CD4-positive, alpha-beta memory T cell (primary cell): ENCODE measurements at regions of chr1 and their contacts with region 1.

Region 1: GRCh38 chr1:27300341-27301051 is 21.5 kb upstream of the TMEM222 start:
- DNase-seq: peak; percentile 66 to 79 (median 76)
- H3K4me3 ChIP-seq: no peak overlapping the region
- H3K4me3 Mint-ChIP-seq: no peak overlapping the region
- H3K27ac ChIP-seq: no peak overlapping the region
- H3K27ac Mint-ChIP-seq: peak overlapping the region in 1 of 7 donors; percentile 43
- H3K4me1 ChIP-seq: no peaks in the 10 kb centered on the region
- H3K4me1 Mint-ChIP-seq: peaks cover 0 to 2% (median 1%) of the 10 kb centered on the region in 4 donors
- H3K27me3 ChIP-seq: no peaks in the 10 kb centered on the region
- H3K27me3 Mint-ChIP-seq: no peaks in the 10 kb centered on the region

Region 2: DNA sequence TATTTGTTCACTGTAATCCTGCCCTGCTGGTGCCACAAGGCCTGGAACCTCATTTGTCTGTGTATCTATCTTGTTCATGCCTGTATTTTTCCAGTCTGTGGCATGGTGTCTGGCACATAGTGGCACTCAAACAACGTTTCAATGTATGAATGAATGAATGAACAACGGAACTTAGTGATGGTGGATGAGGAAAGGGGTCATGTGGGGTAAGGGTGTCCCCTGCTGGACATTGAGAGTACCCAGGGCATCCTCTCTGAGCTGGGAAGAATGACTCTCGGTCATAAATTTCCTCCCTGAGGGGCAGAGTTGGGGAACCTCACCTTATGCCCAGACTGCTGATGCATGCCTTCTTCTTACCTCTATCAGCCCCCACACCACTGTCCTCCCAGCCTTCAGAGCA is 909.0 kb before region 1 on chr1:
- CTCF ChIA-PET with region 1: no interaction called
- POLR2A ChIA-PET with region 1: no interaction called
- intact Hi-C with region 1: no loop called
- DNase-seq: peak; percentile 52 to 63 (median 56)
- H3K4me3 ChIP-seq: no peak overlapping the region
- H3K4me3 Mint-ChIP-seq: peak overlapping the region in 2 of 8 donors; percentile 1 to 43
- H3K27ac ChIP-seq: no peak overlapping the region
- H3K27ac Mint-ChIP-seq: peak overlapping the region in 3 of 7 donors; percentile 51 to 75 (median 59)
- H3K4me1 ChIP-seq: peaks cover 42% of the 10 kb centered on the region
- H3K4me1 Mint-ChIP-seq: peaks cover 24 to 40% (median 28%) of the 10 kb centered on the region in 4 donors
- H3K27me3 ChIP-seq: no peaks in the 10 kb centered on the region
- H3K27me3 Mint-ChIP-seq: no peaks in the 10 kb centered on the region

Region 3: GRCh38 chr1:27097484-27097917 is 203.0 kb before region 1 on chr1:
- CTCF ChIA-PET with region 1: interaction called, 17 read pairs
- POLR2A ChIA-PET with region 1: no interaction called
- intact Hi-C with region 1: no loop called
- DNase-seq: peak; percentile 64 to 72 (median 68)
- H3K4me3 ChIP-seq: no peak overlapping the region
- H3K4me3 Mint-ChIP-seq: no peak overlapping the region
- H3K27ac ChIP-seq: no peak overlapping the region
- H3K27ac Mint-ChIP-seq: peak overlapping the region in 1 of 7 donors; percentile 40
- H3K4me1 ChIP-seq: no peaks in the 10 kb centered on the region
- H3K4me1 Mint-ChIP-seq: peaks cover 0 to 4% (median 3%) of the 10 kb centered on the region in 4 donors
- H3K27me3 ChIP-seq: no peaks in the 10 kb centered on the region
- H3K27me3 Mint-ChIP-seq: no peaks in the 10 kb centered on the region

Region 4: GRCh38 chr1:27111626-27112573 is 188.6 kb before region 1 on chr1:
- CTCF ChIA-PET with region 1: interaction called, 49 read pairs
- POLR2A ChIA-PET with region 1: no interaction called
- intact Hi-C with region 1: no loop called
- DNase-seq: peak; percentile 64 to 80 (median 69)
- H3K4me3 ChIP-seq: no peak overlapping the region
- H3K4me3 Mint-ChIP-seq: peak overlapping the region; percentile 21 to 83 (median 62)
- H3K27ac ChIP-seq: peak overlapping the region; percentile 48
- H3K27ac Mint-ChIP-seq: peak overlapping the region; percentile 74 to 90 (median 87)
- H3K4me1 ChIP-seq: peaks cover 31% of the 10 kb centered on the region
- H3K4me1 Mint-ChIP-seq: peaks cover 34 to 67% (median 51%) of the 10 kb centered on the region in 4 donors
- H3K27me3 ChIP-seq: no peaks in the 10 kb centered on the region
- H3K27me3 Mint-ChIP-seq: no peaks in the 10 kb centered on the region

Region 5: GRCh38 chr1:27314169-27314568 is 13.7 kb after region 1 on chr1:
- CTCF ChIA-PET with region 1: interaction called, 38 read pairs
- POLR2A ChIA-PET with region 1: interaction called, 3 read pairs
- intact Hi-C with region 1: no loop called
- DNase-seq: no peak
- H3K4me3 ChIP-seq: no peak overlapping the region
- H3K4me3 Mint-ChIP-seq: no peak overlapping the region
- H3K27ac ChIP-seq: no peak overlapping the region
- H3K27ac Mint-ChIP-seq: peak overlapping the region in 2 of 7 donors; percentile 22 to 57
- H3K4me1 ChIP-seq: no peaks in the 10 kb centered on the region
- H3K4me1 Mint-ChIP-seq: no peaks in the 10 kb centered on the region
- H3K27me3 ChIP-seq: no peaks in the 10 kb centered on the region
- H3K27me3 Mint-ChIP-seq: peaks cover 0 to 3% of the 10 kb centered on the region in 2 donors

Region 6: DNA sequence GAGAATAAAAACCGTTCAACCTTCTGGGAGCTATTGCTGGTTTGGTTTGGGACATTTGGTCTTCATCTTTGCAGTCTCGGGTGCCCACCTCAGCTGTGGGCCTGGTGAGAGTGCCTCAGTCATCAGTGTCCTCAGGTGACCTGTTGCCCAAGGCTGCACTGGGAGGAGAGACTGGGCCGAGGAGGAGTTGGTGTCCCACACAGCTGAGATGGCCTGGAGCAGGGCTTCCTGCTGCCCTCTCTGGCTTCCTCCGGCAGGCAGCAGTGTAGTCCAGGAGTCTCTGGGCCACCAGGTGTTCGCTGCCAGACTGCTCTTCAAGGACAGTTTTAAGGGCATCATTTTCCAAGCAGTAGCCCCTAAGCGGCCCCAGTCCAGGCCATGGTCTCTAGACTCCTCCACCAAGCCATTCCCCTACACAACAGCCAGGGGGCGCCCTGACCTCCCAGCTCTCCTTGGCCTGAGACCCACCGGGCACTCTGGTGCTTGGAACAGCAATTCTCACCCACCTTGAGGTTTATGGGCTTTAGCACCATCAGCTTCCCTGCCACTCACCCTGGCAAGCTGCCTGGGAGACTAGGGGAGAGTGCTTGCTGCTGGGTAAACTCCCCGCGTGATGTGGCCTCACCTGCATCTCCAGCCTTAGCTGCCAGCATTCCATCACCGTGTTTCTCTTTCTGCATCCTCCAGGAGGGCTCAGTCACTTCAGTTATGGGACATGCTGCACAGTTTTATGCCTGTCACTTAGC is 32.2 kb after region 1 on chr1:
- CTCF ChIA-PET with region 1: interaction called, 42 read pairs
- POLR2A ChIA-PET with region 1: interaction called, 3 read pairs
- intact Hi-C with region 1: no loop called
- DNase-seq: peak; percentile 54 to 65 (median 58)
- H3K4me3 ChIP-seq: no peak overlapping the region
- H3K4me3 Mint-ChIP-seq: peak overlapping the region in 2 of 8 donors; percentile 7 to 25
- H3K27ac ChIP-seq: peak overlapping the region; percentile 10
- H3K27ac Mint-ChIP-seq: peak overlapping the region in 6 of 7 donors; percentile 5 to 75 (median 61)
- H3K4me1 ChIP-seq: peaks cover 33% of the 10 kb centered on the region
- H3K4me1 Mint-ChIP-seq: peaks cover 22 to 48% (median 34%) of the 10 kb centered on the region in 4 donors
- H3K27me3 ChIP-seq: no peaks in the 10 kb centered on the region
- H3K27me3 Mint-ChIP-seq: no peaks in the 10 kb centered on the region

Region 7: GRCh38 chr1:27365372-27366112 is 65.0 kb after region 1 on chr1:
- CTCF ChIA-PET with region 1: interaction called, 13 read pairs
- POLR2A ChIA-PET with region 1: no interaction called
- intact Hi-C with region 1: no loop called
- DNase-seq: peak; percentile 65 to 76 (median 67)
- H3K4me3 ChIP-seq: peak overlapping the region; percentile 36 to 54
- H3K4me3 Mint-ChIP-seq: peak overlapping the region; percentile 86 to 94 (median 88)
- H3K27ac ChIP-seq: peak overlapping the region; percentile 51
- H3K27ac Mint-ChIP-seq: peak overlapping the region; percentile 49 to 88 (median 77)
- H3K4me1 ChIP-seq: peaks cover 18% of the 10 kb centered on the region
- H3K4me1 Mint-ChIP-seq: peaks cover 13 to 52% (median 25%) of the 10 kb centered on the region in 4 donors
- H3K27me3 ChIP-seq: no peaks in the 10 kb centered on the region
- H3K27me3 Mint-ChIP-seq: no peaks in the 10 kb centered on the region

Region 8: GRCh38 chr1:27504588-27505419 is 204.3 kb after region 1 on chr1:
- CTCF ChIA-PET with region 1: no interaction called
- POLR2A ChIA-PET with region 1: no interaction called
- intact Hi-C with region 1: no loop called
- DNase-seq: no peak
- H3K4me3 ChIP-seq: no peak overlapping the region
- H3K4me3 Mint-ChIP-seq: no peak overlapping the region
- H3K27ac ChIP-seq: no peak overlapping the region
- H3K27ac Mint-ChIP-seq: no peak overlapping the region
- H3K4me1 ChIP-seq: no peaks in the 10 kb centered on the region
- H3K4me1 Mint-ChIP-seq: peaks cover 0 to 5% (median 0%) of the 10 kb centered on the region in 4 donors
- H3K27me3 ChIP-seq: no peaks in the 10 kb centered on the region
- H3K27me3 Mint-ChIP-seq: no peaks in the 10 kb centered on the region

Region 9: DNA sequence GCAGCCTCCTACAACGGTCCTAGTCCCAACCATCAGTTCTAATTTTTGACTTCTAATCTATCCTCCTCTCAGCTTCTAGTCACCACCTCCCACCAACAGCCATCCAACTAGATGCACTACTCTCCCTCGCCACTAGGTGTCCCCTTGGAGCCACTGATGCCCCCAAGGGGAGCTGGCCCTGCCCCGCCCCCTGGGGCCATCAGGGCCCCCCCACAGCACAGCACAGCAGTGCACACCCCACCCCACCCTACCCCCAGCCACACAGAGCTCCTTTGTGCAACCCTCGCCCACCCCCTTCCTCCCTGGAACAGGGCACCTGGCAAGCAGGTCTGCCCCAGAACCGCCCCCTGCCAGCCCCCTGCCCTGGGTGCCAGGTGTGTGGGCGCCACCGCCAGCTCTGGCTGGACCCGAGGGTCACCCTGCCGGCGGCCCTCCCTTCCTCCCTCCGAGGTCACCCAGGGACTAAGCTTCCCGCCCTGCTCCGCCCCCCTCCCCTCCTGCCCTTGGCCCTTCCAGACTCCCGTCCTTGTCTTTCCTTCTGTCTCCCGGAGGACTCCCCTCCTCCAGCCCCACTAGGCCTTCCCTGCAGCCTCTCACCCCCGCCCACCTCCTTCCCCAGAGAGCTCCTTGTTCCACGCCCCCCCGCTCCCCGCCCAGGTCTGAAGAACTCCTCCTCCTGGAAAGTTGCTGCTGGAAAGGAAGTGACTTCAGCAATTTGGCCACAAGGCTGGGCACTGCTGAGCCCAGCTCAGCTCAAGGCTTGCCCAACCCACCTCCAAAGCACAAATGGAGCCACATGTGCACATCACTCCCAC is 256.5 kb after region 1 on chr1:
- CTCF ChIA-PET with region 1: interaction called, 10 read pairs
- POLR2A ChIA-PET with region 1: no interaction called
- intact Hi-C with region 1: no loop called
- DNase-seq: peak; percentile 65 to 70 (median 69)
- H3K4me3 ChIP-seq: no peak overlapping the region
- H3K4me3 Mint-ChIP-seq: peak overlapping the region; percentile 18 to 78 (median 45)
- H3K27ac ChIP-seq: no peak overlapping the region
- H3K27ac Mint-ChIP-seq: peak overlapping the region in 5 of 7 donors; percentile 49 to 77 (median 59)
- H3K4me1 ChIP-seq: peaks cover 17% of the 10 kb centered on the region
- H3K4me1 Mint-ChIP-seq: peaks cover 18 to 44% (median 28%) of the 10 kb centered on the region in 4 donors
- H3K27me3 ChIP-seq: no peaks in the 10 kb centered on the region
- H3K27me3 Mint-ChIP-seq: no peaks in the 10 kb centered on the region